Naive thymus-derived CD4-positive, alpha-beta T cell (primary cell): ENCODE measurements at regions of chrX and their contacts with region 1.

Region 1: GRCh38 chrX:101097546-101098453 is at the start of gene CENPI:
- DNase-seq: peak; percentile 84 to 95 (median 93)
- ATAC-seq: peak; percentile 100
- H3K4me3 ChIP-seq: peak within 1 kb of the TSS; percentile 70
- H3K4me3 Mint-ChIP-seq: peak within 1 kb of the TSS; percentile 69 to 95 (median 90)
- H3K27ac ChIP-seq: peak within 1 kb of the TSS; percentile 84
- H3K27ac Mint-ChIP-seq: peak within 1 kb of the TSS; percentile 83 to 99 (median 93)
- H3K4me1 ChIP-seq: peaks cover 0 to 3% of the 10 kb centered on the region in 2 donors
- H3K4me1 Mint-ChIP-seq: peaks cover 0 to 28% (median 9%) of the 10 kb centered on the region in 7 donors
- H3K27me3 ChIP-seq: no peaks in the 10 kb centered on the region
- H3K27me3 Mint-ChIP-seq: no peaks in the 10 kb centered on the region
- total RNA-seq, gene CENPI: 0.24 to 18.4 (median 0.88) TPM

Region 2: DNA sequence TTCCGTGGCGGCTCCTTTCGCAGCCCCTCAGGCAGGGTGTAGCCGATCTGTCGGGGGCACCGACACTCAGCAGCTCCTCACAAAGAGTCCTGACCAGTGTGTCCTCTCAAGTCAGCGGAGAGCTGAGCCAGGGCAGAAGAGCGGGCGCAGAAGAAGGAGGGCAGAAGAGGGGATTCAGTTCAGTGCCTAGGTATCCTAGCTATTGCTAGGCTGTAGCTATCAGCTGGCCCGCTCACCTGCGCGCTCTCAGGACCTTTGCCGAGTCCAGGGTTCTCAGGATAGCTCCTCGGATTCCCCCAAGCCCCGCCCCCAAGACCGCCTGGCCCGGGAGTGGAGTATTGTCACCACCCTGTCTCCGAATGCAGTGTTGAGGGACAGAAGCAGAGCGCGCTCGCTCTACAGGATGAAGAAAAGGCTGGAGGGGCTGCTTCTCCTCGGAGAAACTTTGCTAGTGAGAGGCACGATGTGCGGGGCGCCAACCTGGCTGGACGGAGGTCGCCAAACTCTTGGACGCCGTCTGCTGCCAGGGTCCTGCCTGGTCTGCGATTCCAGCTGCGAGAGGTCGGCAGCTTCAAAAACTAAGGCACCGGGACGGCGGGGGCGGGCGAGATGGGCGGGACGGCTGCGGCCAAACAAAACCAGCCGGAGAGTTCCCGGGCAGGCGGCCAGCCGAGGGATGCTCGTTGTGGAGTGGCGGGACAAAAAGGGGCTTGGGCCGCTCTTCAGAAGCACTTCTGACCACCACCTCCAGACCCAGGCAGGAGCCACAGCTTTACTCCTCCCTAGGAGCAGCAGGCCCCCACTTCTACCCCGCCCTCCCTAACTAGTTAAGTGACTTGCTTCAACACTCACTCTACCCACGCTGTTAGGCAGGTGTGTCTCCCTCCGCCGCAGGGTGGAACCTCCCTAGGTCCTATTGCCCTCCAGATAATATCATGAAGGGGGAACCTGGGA is 168.9 kb before region 1 on chrX and contains the start of gene XKRX:
- CTCF ChIA-PET with region 1: interaction called, 3 read pairs
- POLR2A ChIA-PET with region 1: no interaction called
- intact Hi-C with region 1: loop called in 1 of 2 experiments (anchors 2 kb)
- DNase-seq: peak in 8 of 9 donors; percentile 16 to 64 (median 41)
- ATAC-seq: peak; percentile 90
- H3K4me3 ChIP-seq: peak within 1 kb of the TSS; percentile 56
- H3K4me3 Mint-ChIP-seq: peak within 1 kb of the TSS; percentile 87 to 97 (median 95)
- H3K27ac ChIP-seq: peak within 1 kb of the TSS; percentile 65
- H3K27ac Mint-ChIP-seq: peak within 1 kb of the TSS in 8 of 9 donors; percentile 50 to 90 (median 86)
- H3K4me1 ChIP-seq: peaks cover 0 to 10% of the 10 kb centered on the region in 2 donors
- H3K4me1 Mint-ChIP-seq: peaks cover 8 to 57% (median 47%) of the 10 kb centered on the region in 7 donors
- H3K27me3 ChIP-seq: no peaks in the 10 kb centered on the region
- H3K27me3 Mint-ChIP-seq: no peaks in the 10 kb centered on the region
- total RNA-seq, gene XKRX: 0.10 to 3.4 (median 1.5) TPM

Region 3: DNA sequence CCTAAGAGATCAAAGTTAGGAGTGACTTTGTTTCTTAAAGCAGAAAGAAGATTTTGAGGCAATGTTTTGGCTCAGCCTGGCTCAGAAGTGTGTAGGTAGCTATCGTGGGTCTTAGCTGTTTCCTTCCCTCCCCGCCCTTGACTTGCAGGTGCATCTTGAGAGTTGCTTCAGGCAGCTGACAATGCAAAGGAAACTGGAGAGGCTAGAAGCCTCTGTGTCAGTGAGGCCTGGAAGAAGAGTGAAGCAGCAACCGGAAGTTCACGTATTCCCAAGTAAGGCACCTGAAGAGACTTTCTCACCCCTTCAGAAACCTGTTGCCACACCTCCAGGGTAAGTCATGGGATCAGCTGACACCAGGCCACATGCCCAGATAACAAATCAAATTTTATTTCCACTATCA is 158.5 kb before region 1 on chrX:
- CTCF ChIA-PET with region 1: no interaction called
- POLR2A ChIA-PET with region 1: no interaction called
- intact Hi-C with region 1: no loop called
- DNase-seq: peak in 6 of 9 donors; percentile 13 to 47 (median 30)
- ATAC-seq: peak; percentile 40
- H3K4me3 ChIP-seq: no peak overlapping the region
- H3K4me3 Mint-ChIP-seq: peak overlapping the region in 4 of 10 donors; percentile 7 to 26 (median 18)
- H3K27ac ChIP-seq: peak overlapping the region; percentile 52
- H3K27ac Mint-ChIP-seq: peak overlapping the region in 8 of 9 donors; percentile 50 to 89 (median 82)
- H3K4me1 ChIP-seq: no peaks in the 10 kb centered on the region
- H3K4me1 Mint-ChIP-seq: peaks cover 0 to 29% (median 11%) of the 10 kb centered on the region in 7 donors
- H3K27me3 ChIP-seq: no peaks in the 10 kb centered on the region
- H3K27me3 Mint-ChIP-seq: no peaks in the 10 kb centered on the region

Region 4: DNA sequence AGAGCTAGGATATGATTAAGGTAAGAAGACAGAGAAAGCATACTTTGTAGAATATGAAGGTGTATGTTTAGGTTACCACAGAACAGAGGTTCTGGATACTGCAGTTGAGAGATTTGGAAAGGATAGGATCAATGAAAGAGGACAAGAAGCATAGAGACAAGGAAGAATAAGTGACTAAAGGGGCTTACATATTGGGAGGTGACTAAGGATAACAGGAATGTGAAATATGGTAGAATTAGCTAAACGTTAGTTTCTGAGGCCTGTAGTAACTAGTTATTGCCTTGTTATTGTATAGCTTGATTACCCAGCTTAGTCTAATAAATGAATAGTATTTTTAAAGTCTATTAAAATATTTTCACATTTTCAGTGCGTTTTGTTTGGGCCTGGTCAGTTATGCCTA is 38.4 kb after region 1 on chrX:
- CTCF ChIA-PET with region 1: no interaction called
- POLR2A ChIA-PET with region 1: no interaction called
- intact Hi-C with region 1: no loop called
- DNase-seq: no peak
- ATAC-seq: no peak
- H3K4me3 ChIP-seq: no peak overlapping the region
- H3K4me3 Mint-ChIP-seq: no peak overlapping the region
- H3K27ac ChIP-seq: no peak overlapping the region
- H3K27ac Mint-ChIP-seq: no peak overlapping the region
- H3K4me1 ChIP-seq: no peaks in the 10 kb centered on the region
- H3K4me1 Mint-ChIP-seq: no peaks in the 10 kb centered on the region
- H3K27me3 ChIP-seq: no peaks in the 10 kb centered on the region
- H3K27me3 Mint-ChIP-seq: no peaks in the 10 kb centered on the region

Region 5: GRCh38 chrX:101390664-101391525 is 293.1 kb after region 1 on chrX and contains the start of gene RPL36A:
- CTCF ChIA-PET with region 1: no interaction called
- POLR2A ChIA-PET with region 1: no interaction called
- intact Hi-C with region 1: loop called in 1 of 2 experiments (anchors 5 kb)
- DNase-seq: peak; percentile 41 to 75 (median 66)
- ATAC-seq: peak; percentile 97
- H3K4me3 ChIP-seq: peak within 1 kb of the TSS; percentile 66
- H3K4me3 Mint-ChIP-seq: peak within 1 kb of the TSS; percentile 81 to 96 (median 90)
- H3K27ac ChIP-seq: peak within 1 kb of the TSS; percentile 80
- H3K27ac Mint-ChIP-seq: peak within 1 kb of the TSS; percentile 80 to 97 (median 94)
- H3K4me1 ChIP-seq: peaks cover 4 to 5% of the 10 kb centered on the region in 2 donors
- H3K4me1 Mint-ChIP-seq: peaks cover 0 to 35% (median 18%) of the 10 kb centered on the region in 7 donors
- H3K27me3 ChIP-seq: no peaks in the 10 kb centered on the region
- H3K27me3 Mint-ChIP-seq: no peaks in the 10 kb centered on the region
- total RNA-seq, gene RPL36A: 113 to 342 (median 282) TPM

Region 6: DNA sequence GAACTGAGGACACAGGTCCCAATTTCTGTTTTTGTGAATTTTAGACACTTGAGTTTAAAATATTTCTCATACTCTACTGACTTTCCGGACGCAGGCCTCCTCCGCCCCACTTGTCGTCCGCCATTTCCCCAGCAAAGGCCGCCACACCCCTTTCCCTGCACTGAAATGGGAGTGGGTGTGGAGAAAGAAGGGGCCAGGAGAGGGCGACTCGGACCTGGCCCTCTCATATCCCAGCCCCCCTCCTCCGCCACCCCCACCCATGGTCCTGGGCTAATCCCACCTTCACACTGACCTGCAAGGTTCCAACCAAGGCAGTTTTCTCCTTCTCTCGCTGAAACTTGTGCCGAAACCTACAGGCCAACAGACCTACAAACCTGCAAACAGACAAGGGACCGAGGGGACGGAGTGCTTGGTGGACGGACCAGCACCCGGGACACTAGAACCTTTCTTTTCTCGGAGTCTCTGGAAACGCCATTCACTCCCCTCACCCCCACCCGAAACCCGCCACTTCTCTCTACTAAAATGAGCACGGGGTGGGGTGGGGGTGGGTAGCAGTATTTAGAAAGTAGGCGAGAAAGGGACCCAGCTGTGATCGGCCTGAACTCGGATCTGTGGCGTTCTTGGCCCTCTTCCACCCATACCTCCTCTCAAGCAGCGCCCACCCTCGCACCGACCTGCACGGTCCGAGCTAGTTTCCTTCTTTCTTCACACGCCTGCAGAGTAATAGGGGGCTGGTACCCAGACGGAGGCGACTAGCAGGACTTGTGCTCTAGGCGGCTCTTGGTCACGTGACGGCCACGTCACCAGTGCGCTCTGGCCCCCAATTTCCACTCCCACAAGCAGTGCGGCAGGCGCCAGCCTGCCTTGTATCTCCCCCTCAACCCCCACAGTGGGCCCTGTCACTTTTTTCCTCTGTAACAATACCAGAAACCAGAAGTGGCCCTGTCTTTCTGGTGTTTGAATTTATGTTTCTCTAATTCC is 519.7 kb after region 1 on chrX and contains the start of gene ARMCX6:
- CTCF ChIA-PET with region 1: no interaction called
- POLR2A ChIA-PET with region 1: no interaction called
- intact Hi-C with region 1: loop called in 1 of 2 experiments (anchors 10 kb)
- DNase-seq: peak; percentile 39 to 80 (median 63)
- ATAC-seq: peak; percentile 92
- H3K4me3 ChIP-seq: peak within 1 kb of the TSS; percentile 77
- H3K4me3 Mint-ChIP-seq: peak within 1 kb of the TSS; percentile 89 to 97 (median 92)
- H3K27ac ChIP-seq: peak within 1 kb of the TSS; percentile 79
- H3K27ac Mint-ChIP-seq: peak within 1 kb of the TSS; percentile 71 to 97 (median 94)
- H3K4me1 ChIP-seq: peaks cover 4 to 9% of the 10 kb centered on the region in 2 donors
- H3K4me1 Mint-ChIP-seq: peaks cover 0 to 24% (median 15%) of the 10 kb centered on the region in 7 donors
- H3K27me3 ChIP-seq: no peaks in the 10 kb centered on the region
- H3K27me3 Mint-ChIP-seq: no peaks in the 10 kb centered on the region
- total RNA-seq, gene ARMCX6: 27.3 to 42.5 (median 39.9) TPM